Naive thymus-derived CD4-positive, alpha-beta T cell (primary cell): ENCODE measurements at regions of chr2 and their contacts with region 1.

Region 1: GRCh38 chr2:9813312-9814133 is 29.8 kb upstream of the TAF1B start:
- DNase-seq: peak; percentile 26 to 76 (median 61)
- ATAC-seq: peak; percentile 89
- H3K4me3 ChIP-seq: no peak overlapping the region
- H3K4me3 Mint-ChIP-seq: peak overlapping the region in 1 of 10 donors; percentile 54
- H3K27ac ChIP-seq: no peak overlapping the region
- H3K27ac Mint-ChIP-seq: peak overlapping the region in 1 of 9 donors; percentile 67
- H3K4me1 ChIP-seq: peaks cover 6% of the 10 kb centered on the region in 2 donors
- H3K4me1 Mint-ChIP-seq: peaks cover 9 to 20% (median 17%) of the 10 kb centered on the region in 7 donors
- H3K27me3 ChIP-seq: no peaks in the 10 kb centered on the region
- H3K27me3 Mint-ChIP-seq: peaks cover 0 to 10% (median 6%) of the 10 kb centered on the region in 5 donors

Region 2: DNA sequence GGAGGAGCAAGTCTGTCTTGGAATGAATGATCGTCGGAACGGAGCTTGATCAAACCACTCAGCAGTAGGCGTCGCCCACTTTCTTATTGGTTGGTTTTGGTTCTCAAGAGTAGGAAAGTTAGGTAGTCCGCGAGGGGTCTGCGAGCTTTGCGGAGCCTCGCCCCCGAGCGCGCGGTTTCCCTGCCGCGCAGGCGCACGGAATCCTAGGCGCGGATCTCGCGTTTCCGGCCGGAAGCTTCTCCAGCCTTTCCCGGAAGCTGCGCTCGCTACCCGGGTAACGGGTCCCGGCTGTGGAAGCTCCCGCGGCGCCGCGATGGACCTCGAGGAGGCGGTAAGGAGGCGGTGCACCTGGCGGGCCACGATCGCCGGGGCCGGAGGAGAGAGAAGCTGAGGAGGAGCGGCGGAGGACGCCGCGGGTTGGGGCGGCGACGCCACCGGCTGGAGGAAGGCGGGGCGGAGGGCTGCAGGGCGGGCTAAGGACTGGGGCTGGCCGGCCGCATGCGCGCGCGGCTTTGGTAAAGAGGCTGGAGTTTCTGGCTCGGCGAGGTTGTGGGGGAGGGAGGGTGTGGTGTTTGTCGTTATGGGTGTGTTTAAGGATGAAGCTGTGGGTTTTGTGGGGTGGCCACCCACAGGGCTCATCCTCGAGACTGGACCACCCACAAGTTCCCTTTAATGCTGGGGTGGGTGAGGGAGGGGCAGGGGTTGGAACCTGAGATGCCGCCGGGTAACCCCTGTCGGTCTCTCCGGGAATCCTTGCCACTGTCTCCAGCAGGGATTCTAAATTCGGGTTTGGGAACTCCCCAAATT is 29.9 kb after region 1 on chr2 and contains the start of gene TAF1B:
- CTCF ChIA-PET with region 1: interaction called, 5 read pairs
- POLR2A ChIA-PET with region 1: no interaction called
- intact Hi-C with region 1: loop called (anchors 1 kb)
- DNase-seq: peak; percentile 55 to 89 (median 80)
- ATAC-seq: peak; percentile 87
- H3K4me3 ChIP-seq: peak within 1 kb of the TSS; percentile 85
- H3K4me3 Mint-ChIP-seq: peak within 1 kb of the TSS; percentile 89 to 95 (median 93)
- H3K27ac ChIP-seq: peak within 1 kb of the TSS; percentile 72
- H3K27ac Mint-ChIP-seq: peak within 1 kb of the TSS; percentile 74 to 97 (median 92)
- H3K4me1 ChIP-seq: peaks cover 11 to 13% of the 10 kb centered on the region in 2 donors
- H3K4me1 Mint-ChIP-seq: peaks cover 25 to 56% (median 48%) of the 10 kb centered on the region in 7 donors
- H3K27me3 ChIP-seq: no peaks in the 10 kb centered on the region
- H3K27me3 Mint-ChIP-seq: peaks cover 0 to 6% (median 0%) of the 10 kb centered on the region in 5 donors
- total RNA-seq, gene TAF1B: 9.2 to 28.2 (median 20.9) TPM

Region 3: GRCh38 chr2:9914384-9915065 is 101.0 kb after region 1 on chr2:
- CTCF ChIA-PET with region 1: no interaction called
- POLR2A ChIA-PET with region 1: no interaction called
- intact Hi-C with region 1: loop called in 1 of 2 experiments (anchors 5 kb)
- DNase-seq: no peak
- ATAC-seq: no peak
- H3K4me3 ChIP-seq: no peak overlapping the region
- H3K4me3 Mint-ChIP-seq: no peak overlapping the region
- H3K27ac ChIP-seq: no peak overlapping the region
- H3K27ac Mint-ChIP-seq: no peak overlapping the region
- H3K4me1 ChIP-seq: no peaks in the 10 kb centered on the region
- H3K4me1 Mint-ChIP-seq: peaks cover 0 to 9% (median 0%) of the 10 kb centered on the region in 7 donors
- H3K27me3 ChIP-seq: no peaks in the 10 kb centered on the region
- H3K27me3 Mint-ChIP-seq: no peaks in the 10 kb centered on the region

Region 4: DNA sequence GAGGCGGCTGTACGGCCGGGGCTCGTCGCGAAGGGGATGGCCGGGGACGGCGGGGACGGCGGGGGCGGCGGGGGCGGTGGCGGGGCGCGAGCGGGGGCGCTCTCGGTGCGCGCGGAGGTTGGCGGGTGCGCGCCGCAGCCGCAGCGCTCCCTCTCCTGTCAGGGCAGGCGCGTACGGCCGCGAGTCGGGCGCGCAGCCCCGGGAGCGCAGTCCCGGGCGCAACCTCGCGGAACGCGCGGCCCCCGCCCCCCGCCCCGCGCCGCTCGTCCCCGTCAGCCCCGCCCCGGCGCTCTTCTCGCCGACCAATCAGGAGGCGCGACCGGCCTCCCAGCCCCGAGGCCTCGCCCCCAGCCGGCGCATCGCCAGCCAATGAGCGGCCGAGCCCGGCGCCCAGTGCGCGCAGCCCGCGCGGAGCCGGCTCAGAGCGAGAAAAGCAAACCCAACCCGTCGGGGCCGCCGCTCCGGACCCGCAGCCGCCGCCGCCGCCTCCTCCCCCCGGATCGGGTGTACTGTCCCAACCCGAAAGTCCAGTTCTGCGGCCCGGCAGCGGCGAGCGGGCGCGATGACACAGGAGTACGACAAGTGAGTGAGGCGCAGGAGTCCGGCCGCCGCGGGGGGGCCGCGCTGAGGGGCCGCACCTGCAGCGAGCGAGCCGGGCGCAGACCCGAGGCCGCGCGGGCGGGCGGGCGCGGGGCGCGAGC is 137.9 kb after region 1 on chr2 and contains the start of gene GRHL1:
- CTCF ChIA-PET with region 1: no interaction called
- POLR2A ChIA-PET with region 1: no interaction called
- intact Hi-C with region 1: loop called in 1 of 2 experiments (anchors 10 kb)
- DNase-seq: peak; percentile 82 to 95 (median 90)
- ATAC-seq: peak; percentile 97
- H3K4me3 ChIP-seq: peak within 1 kb of the TSS; percentile 57
- H3K4me3 Mint-ChIP-seq: peak within 1 kb of the TSS; percentile 70 to 90 (median 86)
- H3K27ac ChIP-seq: peak within 1 kb of the TSS; percentile 63
- H3K27ac Mint-ChIP-seq: peak within 1 kb of the TSS in 7 of 9 donors; percentile 15 to 77 (median 56)
- H3K4me1 ChIP-seq: no peaks in the 10 kb centered on the region
- H3K4me1 Mint-ChIP-seq: peaks cover 0 to 13% (median 8%) of the 10 kb centered on the region in 7 donors
- H3K27me3 ChIP-seq: no peaks in the 10 kb centered on the region
- H3K27me3 Mint-ChIP-seq: peaks cover 19 to 77% (median 39%) of the 10 kb centered on the region in 5 donors
- total RNA-seq, gene GRHL1: 0.19 to 1.3 (median 0.56) TPM

Region 5: DNA sequence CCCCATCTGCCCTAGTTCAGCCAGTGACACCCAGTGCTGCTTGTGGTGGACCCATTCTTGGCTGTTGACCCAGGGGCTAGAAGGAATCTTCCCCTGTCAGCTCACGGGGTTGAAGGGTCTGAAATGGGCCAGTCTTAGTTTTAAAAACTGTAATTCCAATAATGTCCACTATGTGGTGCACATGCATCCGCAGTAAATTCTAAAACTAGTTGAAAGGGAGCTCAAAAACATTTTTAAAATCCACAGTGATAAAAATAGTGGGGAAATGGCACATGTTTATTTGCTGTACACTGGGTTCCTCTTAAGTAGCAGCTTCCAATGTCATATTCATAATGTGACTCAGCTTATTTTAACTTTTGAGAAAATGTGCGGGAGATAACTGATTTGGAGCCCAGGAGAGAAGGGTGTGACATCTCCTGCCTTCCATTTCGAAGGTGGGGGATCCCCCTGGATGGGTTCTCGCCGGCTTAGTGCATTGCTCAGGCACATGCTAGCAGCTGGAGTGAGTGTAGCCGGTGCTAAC is 170.8 kb after region 1 on chr2:
- CTCF ChIA-PET with region 1: interaction called, 5 read pairs
- POLR2A ChIA-PET with region 1: no interaction called
- intact Hi-C with region 1: loop called in 1 of 2 experiments (anchors 1 kb)
- DNase-seq: peak in 6 of 9 donors; percentile 18 to 63 (median 52)
- ATAC-seq: peak; percentile 94
- H3K4me3 ChIP-seq: no peak overlapping the region
- H3K4me3 Mint-ChIP-seq: no peak overlapping the region
- H3K27ac ChIP-seq: no peak overlapping the region
- H3K27ac Mint-ChIP-seq: peak overlapping the region in 1 of 9 donors; percentile 55
- H3K4me1 ChIP-seq: no peaks in the 10 kb centered on the region
- H3K4me1 Mint-ChIP-seq: peaks cover 9 to 18% (median 14%) of the 10 kb centered on the region in 7 donors
- H3K27me3 ChIP-seq: no peaks in the 10 kb centered on the region
- H3K27me3 Mint-ChIP-seq: peaks cover 0 to 21% (median 5%) of the 10 kb centered on the region in 5 donors

Region 6: GRCh38 chr2:10434886-10435819 is 621.6 kb after region 1 on chr2:
- CTCF ChIA-PET with region 1: no interaction called
- POLR2A ChIA-PET with region 1: no interaction called
- intact Hi-C with region 1: loop called (anchors 10 kb)
- DNase-seq: peak; percentile 31 to 84 (median 64)
- ATAC-seq: peak; percentile 74
- H3K4me3 ChIP-seq: no peak overlapping the region
- H3K4me3 Mint-ChIP-seq: peak overlapping the region in 1 of 10 donors; percentile 27
- H3K27ac ChIP-seq: no peak overlapping the region
- H3K27ac Mint-ChIP-seq: peak overlapping the region in 2 of 9 donors; percentile 14 to 72
- H3K4me1 ChIP-seq: peaks cover 0 to 5% of the 10 kb centered on the region in 2 donors
- H3K4me1 Mint-ChIP-seq: peaks cover 0 to 20% (median 12%) of the 10 kb centered on the region in 7 donors
- H3K27me3 ChIP-seq: peaks cover 0 to 2% of the 10 kb centered on the region in 2 donors
- H3K27me3 Mint-ChIP-seq: peaks cover 0 to 6% (median 2%) of the 10 kb centered on the region in 5 donors